ENCODE measurements at regions of chr17 and their contacts with region 1.

Region 1: DNA sequence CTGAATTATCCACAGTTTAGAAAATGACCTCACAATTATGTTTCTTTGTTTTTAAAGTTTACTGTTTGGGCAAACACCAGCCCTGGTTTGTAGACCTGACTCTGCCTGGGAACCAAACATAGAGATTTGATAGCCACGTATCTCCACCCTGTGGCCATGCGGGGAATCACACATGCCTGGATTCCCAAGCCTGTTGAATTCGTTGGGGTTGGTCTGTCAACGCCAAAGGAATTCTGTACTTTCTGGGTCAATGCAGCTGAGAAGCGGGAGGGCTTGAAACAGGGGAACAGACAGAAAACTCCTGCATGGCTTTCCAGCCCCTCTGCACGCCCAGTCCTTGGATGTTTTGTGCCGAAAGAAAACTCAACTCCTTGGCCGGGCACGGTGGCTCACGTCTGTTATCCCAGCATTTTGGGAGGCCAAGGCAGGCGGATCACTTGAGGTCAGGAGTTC is 27.0 kb downstream of the CD300A start:
- DNase-seq: peak; percentile 91
- H3K4me3 Mint-ChIP-seq: no peak overlapping the region
- H3K27ac Mint-ChIP-seq: no peak overlapping the region
- H3K4me1 Mint-ChIP-seq: peaks cover 13% of the 10 kb centered on the region
- H3K27me3 Mint-ChIP-seq: peaks cover 5% of the 10 kb centered on the region

Region 2: DNA sequence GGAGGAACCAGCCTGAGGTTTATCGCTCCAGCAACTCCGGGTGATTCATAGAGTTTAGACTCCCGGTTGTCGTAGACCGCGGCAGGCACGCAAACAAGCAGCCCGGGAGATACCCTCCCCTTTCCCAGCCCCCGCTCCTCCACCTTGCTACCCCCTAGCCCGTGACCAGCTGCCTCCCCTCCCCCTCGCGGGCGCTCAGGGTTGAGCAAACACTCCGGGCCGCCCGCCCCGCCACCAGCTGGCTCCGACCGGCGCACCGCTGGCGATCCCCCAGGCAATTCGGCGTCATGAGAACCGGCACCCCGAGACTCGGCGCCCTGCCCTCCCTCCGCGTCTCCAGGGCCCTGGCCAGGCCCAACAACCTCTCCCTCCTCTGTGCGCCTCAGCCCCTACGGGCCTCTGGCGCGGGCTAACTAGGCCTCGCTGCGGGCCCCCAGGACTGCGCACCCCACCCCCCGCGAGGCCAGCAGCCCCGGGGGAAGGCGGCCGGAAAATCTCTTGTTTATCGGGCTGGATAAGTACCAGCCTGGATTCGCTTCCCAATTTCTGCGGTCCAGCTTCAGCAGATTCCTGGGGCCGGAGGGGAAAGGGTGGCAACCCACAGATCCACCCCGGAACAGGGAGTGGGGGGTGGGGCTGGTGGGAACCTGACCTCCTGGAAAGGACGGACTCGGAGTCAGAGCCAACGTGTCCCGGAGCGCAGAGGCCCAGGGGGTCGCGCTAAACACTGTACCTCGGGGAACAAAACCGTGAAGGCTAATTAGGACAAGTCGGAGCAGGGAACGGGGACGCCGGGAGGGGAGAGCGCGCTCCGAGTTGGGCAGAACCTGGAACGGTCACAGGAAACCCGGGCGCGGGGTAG is 62.5 kb before region 1 on chr17:
- intact Hi-C with region 1: loop called (anchors 10 kb)
- DNase-seq: peak; percentile 62
- H3K4me3 Mint-ChIP-seq: peak overlapping the region; percentile 74
- H3K27ac Mint-ChIP-seq: peak overlapping the region; percentile 45
- H3K4me1 Mint-ChIP-seq: peaks cover 11% of the 10 kb centered on the region
- H3K27me3 Mint-ChIP-seq: peaks cover 68% of the 10 kb centered on the region

Region 3: DNA sequence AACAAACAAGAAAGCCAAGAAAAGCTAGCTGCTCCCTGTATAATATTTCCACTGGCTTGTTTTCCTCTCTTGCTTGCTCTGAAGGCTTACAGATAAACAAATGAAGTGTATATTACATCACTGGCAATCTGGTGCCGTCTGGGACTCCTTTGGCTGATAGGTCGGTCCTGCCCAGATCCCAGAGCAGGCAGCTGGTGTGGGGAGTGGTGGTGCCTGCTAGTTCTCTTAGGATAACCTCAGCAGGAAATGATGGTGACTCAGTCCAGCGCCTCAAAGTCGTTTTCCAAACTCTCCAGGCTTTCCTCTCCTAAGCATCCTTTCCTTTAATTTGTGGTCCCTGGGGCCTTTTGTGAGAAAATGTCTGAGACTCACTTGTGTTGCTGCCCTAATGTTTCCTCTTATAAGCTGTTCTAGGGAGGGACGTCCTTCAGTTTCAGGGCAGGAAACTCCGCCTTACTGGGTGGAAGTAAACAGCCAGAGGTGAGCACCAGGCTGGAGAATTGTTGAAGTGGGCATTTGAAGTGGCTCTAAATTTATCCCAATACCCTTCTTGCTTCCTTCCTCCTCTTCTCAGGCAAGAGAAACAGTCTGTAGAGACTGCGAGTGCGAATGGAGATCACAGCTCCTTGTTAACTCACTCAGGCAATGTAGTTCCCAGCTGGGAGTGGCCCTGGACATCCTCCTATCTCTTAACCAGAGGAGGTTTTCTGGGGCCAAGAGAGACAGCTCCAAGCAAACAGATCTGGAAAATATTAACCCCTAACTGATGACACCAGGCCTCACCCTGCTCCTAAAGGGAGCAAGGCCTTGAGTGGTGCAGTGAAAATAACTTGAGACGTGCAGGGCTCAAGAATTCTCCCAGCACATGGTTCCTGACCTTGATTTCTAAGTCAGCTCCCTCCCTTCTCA is 184.4 kb after region 1 on chr17:
- intact Hi-C with region 1: no loop called
- DNase-seq: peak; percentile 64
- H3K4me3 Mint-ChIP-seq: no peak overlapping the region
- H3K27ac Mint-ChIP-seq: no peak overlapping the region
- H3K4me1 Mint-ChIP-seq: peaks cover 15% of the 10 kb centered on the region
- H3K27me3 Mint-ChIP-seq: peaks cover 44% of the 10 kb centered on the region